ENCODE measurements at regions of chr18 and their contacts with region 1.

Region 1: DNA sequence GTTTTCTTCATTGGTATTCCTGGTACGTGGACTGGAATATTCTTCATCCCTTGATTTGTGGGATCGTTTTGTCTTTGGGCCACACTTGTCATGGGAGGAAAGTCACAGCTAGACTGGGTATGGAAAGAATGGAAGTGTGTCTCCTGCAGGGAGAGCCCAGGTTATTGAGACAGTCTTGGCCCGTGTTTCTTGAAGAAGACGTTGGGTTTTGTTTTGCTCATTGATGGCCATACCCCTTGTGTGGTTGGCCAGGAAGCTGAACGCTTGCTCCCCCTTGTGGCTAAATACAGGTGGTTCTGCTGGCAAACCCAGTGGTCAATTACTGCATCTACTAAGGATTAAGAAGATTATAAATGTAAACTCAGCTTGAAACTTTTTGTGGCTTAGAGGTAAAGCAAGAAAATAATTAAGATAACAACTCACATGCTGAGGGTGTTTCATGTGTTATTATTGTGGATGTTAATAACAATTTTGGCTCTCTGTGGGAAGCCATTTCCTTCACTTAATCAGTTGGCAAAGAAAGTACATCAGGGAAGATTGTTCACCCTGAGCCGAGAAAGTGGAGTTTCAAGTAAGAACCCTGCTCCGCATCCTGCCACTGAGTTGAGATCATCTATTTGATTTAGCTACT is 91.8 kb downstream of the NEDD4L start:
- DNase-seq: peak in 3 of 5 donors; percentile 29 to 38 (median 33)
- ATAC-seq: peak; percentile 29 to 83 (median 60)
- H3K4me3 ChIP-seq: no peak overlapping the region
- H3K27ac ChIP-seq: no peak overlapping the region
- H3K4me1 ChIP-seq: peaks cover 0 to 7% (median 0%) of the 10 kb centered on the region in 12 donors
- H3K27me3 ChIP-seq: no peaks in the 10 kb centered on the region
- CTCF ChIP-seq: peak; percentile 67 to 87 (median 80)
- POLR2A ChIP-seq: no peak

Region 2: DNA sequence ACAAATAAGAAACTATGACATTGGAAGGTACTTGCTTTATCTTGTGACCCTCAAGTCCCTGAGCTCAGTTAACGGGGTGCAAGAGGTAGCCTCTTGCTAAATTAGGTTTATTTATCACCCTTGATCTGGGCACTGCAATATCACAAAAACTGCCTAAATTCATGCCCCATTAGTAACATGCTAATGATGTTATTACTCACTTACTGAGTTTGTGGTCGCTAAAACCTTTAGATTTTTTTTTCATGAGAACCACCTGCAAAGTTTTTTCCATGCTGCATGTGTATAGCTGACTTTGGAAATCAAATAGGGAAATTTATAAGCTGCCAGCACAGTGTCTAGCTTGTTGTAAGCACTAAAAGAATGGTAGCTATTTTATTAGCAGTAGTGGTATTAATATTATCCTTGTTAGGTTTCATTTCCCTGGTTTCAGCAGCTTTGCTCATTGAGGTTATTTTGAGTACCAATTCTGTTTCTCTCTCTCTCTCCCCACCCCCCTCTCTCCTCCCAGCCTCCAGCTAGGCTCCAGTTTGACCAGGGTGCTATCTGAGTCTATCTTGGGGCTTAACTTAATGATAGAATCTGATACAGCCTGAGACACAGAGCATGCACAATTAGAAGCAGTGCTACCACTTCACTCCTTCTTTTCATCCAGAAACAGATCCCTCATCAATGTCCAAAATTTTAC is 244.0 kb before region 1 on chr18:
- intact Hi-C with region 1: loop called in 1 of 10 experiments (anchors 5 kb)
- DNase-seq: no peak
- ATAC-seq: no peak
- H3K4me3 ChIP-seq: no peak overlapping the region
- H3K27ac ChIP-seq: no peak overlapping the region
- H3K4me1 ChIP-seq: no peaks in the 10 kb centered on the region
- H3K27me3 ChIP-seq: no peaks in the 10 kb centered on the region
- CTCF ChIP-seq: no peak
- POLR2A ChIP-seq: no peak

Region 3: GRCh38 chr18:58101291-58101794 is 34.5 kb before region 1 on chr18:
- intact Hi-C with region 1: no loop called
- DNase-seq: no peak
- ATAC-seq: no peak
- H3K4me3 ChIP-seq: no peak overlapping the region
- H3K27ac ChIP-seq: no peak overlapping the region
- H3K4me1 ChIP-seq: peaks cover 0 to 11% (median 0%) of the 10 kb centered on the region in 12 donors
- H3K27me3 ChIP-seq: no peaks in the 10 kb centered on the region
- CTCF ChIP-seq: no peak
- POLR2A ChIP-seq: no peak

Region 4: GRCh38 chr18:58180738-58181353 is 45.0 kb after region 1 on chr18:
- intact Hi-C with region 1: loop called in 2 of 10 experiments (anchors 5 to 10 kb)
- DNase-seq: peak in 1 of 5 donors; percentile 31
- ATAC-seq: peak in 2 of 4 donors; percentile 43
- H3K4me3 ChIP-seq: no peak overlapping the region
- H3K27ac ChIP-seq: no peak overlapping the region
- H3K4me1 ChIP-seq: peaks cover 0 to 8% (median 0%) of the 10 kb centered on the region in 12 donors
- H3K27me3 ChIP-seq: no peaks in the 10 kb centered on the region
- CTCF ChIP-seq: peak; percentile 76 to 94 (median 88)
- POLR2A ChIP-seq: no peak

Region 5: GRCh38 chr18:58231930-58232329 is 96.1 kb after region 1 on chr18:
- intact Hi-C with region 1: loop called in 2 of 10 experiments (anchors 5 kb)
- DNase-seq: no peak
- ATAC-seq: peak; percentile 48 to 81 (median 74)
- H3K4me3 ChIP-seq: no peak overlapping the region
- H3K27ac ChIP-seq: peak overlapping the region in 2 of 12 donors; percentile 7 to 59
- H3K4me1 ChIP-seq: peaks cover 0 to 4% (median 0%) of the 10 kb centered on the region in 12 donors
- H3K27me3 ChIP-seq: no peaks in the 10 kb centered on the region
- CTCF ChIP-seq: peak in 10 of 12 donors; percentile 26 to 62 (median 42)
- POLR2A ChIP-seq: no peak

Region 6: DNA sequence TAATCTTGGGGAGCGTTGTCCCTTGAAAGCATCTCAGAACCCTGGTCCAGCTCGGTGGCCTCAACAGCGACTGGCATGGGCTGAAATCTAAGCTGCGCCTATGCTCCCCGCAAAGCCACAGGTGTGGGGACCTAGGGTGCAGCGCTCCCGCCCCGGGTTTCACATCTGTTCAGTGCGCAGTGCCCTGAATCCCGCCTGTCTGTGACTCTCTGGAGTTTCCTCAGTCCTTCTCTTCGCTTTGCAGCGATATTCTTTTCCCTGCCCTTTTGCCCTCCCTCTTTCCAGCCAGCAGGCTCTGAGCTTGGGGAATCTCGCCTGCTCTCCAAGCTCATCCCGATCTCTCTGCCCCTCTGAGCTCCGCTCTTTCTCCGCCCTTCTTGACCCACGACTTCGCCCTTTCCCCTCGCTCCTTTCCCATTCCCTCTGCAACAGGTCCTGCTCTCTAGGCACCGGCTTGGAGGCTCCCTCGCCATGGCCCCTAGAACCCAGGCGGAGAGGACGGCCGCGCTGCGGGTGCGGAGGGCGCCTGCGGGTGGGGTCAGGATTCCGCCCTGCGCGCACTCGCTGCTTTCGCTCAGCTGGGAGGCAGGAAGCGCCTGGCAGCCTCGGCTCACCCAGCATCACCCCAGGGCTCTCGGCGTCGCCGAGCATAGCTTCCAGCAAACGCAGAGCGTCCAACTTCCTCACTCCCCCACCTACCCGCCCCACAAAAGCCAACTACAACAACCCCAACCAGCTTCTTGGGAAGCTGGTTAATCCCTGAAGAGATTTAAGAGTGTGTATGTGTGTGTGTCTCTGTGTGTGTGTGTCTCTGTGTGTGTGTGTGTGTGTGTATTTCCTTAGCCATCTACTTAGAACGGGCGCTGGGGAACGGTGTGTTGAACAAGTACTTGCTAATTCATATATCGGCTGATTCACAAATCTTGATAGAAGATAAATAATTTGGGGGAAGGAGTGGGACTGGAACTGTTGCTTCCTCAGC is 1085.3 kb after region 1 on chr18:
- intact Hi-C with region 1: no loop called
- DNase-seq: no peak
- ATAC-seq: peak in 1 of 4 donors; percentile 24
- H3K4me3 ChIP-seq: peak overlapping the region in 8 of 12 donors; percentile 5 to 33 (median 19)
- H3K27ac ChIP-seq: no peak overlapping the region
- H3K4me1 ChIP-seq: peaks cover 0 to 18% (median 0%) of the 10 kb centered on the region in 12 donors
- H3K27me3 ChIP-seq: peaks cover 20 to 76% (median 36%) of the 10 kb centered on the region in 9 donors
- CTCF ChIP-seq: no peak
- POLR2A ChIP-seq: no peak

Measured in heart left ventricle (tissue), 16 donors.